ENCODE measurements at regions of chr3 and their contacts with region 1.

Region 1: DNA sequence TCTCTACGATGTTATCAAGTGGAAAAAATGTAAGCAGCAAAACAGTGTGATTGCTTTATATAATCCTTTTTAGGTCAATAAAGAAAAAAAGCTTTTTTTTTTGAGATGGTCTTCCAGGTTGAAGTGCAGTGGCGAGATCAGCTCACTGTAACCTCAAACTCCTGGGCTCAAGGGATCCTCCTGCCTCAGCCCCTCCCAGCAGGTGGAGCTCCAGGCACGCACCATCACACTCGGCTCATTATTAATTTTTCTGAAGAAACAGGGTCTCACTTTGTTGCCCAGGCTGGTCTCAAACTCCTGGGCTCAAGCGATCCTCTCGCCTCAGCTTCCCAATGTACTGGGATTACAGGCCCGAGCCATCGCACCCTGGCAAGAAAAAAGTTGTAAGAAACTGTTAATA is 17.3 kb downstream of the RNF168 start:
- DNase-seq: peak in 11 of 14 experiments; percentile 5 to 59 (median 30)
- ATAC-seq: no peak
- H3K4me3 ChIP-seq: no peak overlapping the region
- H3K4me3 Mint-ChIP-seq: no peak overlapping the region
- H3K27ac ChIP-seq: no peak overlapping the region
- H3K27ac Mint-ChIP-seq: no peak overlapping the region
- H3K4me1 ChIP-seq: no peaks in the 10 kb centered on the region
- H3K4me1 Mint-ChIP-seq: peaks cover 12% of the 10 kb centered on the region
- H3K27me3 ChIP-seq: no peaks in the 10 kb centered on the region
- H3K27me3 Mint-ChIP-seq: no peaks in the 10 kb centered on the region
- CTCF ChIP-seq: peak; percentile 59

Region 2: DNA sequence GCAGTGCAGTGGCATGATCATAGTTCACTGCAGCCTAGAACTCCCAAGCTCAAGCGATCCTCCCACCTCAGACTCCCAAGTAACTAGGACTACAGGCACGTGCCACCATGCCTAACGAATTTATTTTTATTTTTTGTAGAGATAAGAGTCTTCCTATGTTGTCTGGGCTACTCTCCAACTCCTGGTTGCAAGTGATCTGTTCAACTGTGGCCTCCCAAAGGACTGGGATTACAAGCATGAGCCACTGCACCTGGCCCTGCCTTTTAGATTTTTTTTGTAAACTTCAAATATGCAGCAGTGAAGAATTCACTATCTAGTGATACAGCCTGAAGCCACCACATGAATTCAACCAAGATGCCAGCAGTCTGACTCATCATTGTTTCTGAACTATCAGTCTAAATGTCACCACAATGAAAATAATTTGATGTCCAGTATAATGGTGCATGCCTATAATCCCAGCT is 86.7 kb before region 1 on chr3:
- CTCF ChIA-PET with region 1: no interaction called
- POLR2A ChIA-PET with region 1: no interaction called
- intact Hi-C with region 1: no loop called
- DNase-seq: no peak
- ATAC-seq: no peak
- H3K4me3 ChIP-seq: no peak overlapping the region
- H3K4me3 Mint-ChIP-seq: no peak overlapping the region
- H3K27ac ChIP-seq: no peak overlapping the region
- H3K27ac Mint-ChIP-seq: no peak overlapping the region
- H3K4me1 ChIP-seq: no peaks in the 10 kb centered on the region
- H3K4me1 Mint-ChIP-seq: no peaks in the 10 kb centered on the region
- H3K27me3 ChIP-seq: no peaks in the 10 kb centered on the region
- H3K27me3 Mint-ChIP-seq: no peaks in the 10 kb centered on the region
- CTCF ChIP-seq: no peak

Region 3: DNA sequence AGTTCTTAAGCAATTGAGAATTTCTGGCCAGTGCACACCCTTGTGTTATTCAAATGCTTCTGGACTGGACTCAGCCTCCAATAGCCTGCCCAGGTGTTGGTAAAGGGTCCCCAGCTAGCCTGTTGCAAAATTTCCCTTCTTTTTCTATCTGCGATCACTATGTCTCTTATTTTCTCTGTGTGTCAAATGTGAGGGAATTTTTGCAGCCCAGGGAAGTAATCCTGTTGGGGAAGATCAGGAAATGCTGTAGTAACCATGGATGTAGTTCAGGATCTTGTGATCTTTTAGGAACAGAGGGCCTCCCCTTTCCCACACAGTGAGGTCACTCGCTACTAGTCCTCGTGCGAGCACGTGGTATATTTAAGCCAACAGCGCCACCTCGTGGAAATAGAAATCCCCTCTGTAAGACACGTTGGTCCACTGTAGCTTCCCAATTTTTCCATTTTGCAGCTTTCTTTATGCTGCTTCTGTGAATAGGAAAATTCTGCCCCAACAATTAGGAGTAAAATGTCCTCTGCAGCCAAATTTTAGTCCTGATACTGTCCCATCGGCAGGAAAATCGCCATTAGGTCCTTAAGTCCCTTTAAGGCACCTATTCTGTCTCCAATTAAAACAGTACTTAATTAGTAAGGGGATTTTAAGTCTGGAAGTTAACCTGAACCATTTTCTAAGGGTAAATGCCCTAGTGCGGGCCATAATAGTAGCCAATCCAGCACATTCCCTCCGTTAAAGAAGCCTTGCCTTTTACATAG is 32.9 kb after region 1 on chr3:
- CTCF ChIA-PET with region 1: interaction called, 14 read pairs
- POLR2A ChIA-PET with region 1: no interaction called
- intact Hi-C with region 1: loop called in 1 of 2 experiments (anchors 5 kb)
- DNase-seq: peak; percentile 23 to 77 (median 45)
- ATAC-seq: no peak
- H3K4me3 ChIP-seq: no peak overlapping the region
- H3K4me3 Mint-ChIP-seq: no peak overlapping the region
- H3K27ac ChIP-seq: no peak overlapping the region
- H3K27ac Mint-ChIP-seq: no peak overlapping the region
- H3K4me1 ChIP-seq: no peaks in the 10 kb centered on the region
- H3K4me1 Mint-ChIP-seq: no peaks in the 10 kb centered on the region
- H3K27me3 ChIP-seq: no peaks in the 10 kb centered on the region
- H3K27me3 Mint-ChIP-seq: peaks cover 4% of the 10 kb centered on the region
- CTCF ChIP-seq: peak; percentile 50

Region 4: GRCh38 chr3:196528639-196529233 is 42.5 kb after region 1 on chr3:
- CTCF ChIA-PET with region 1: interaction called, 9 read pairs
- POLR2A ChIA-PET with region 1: no interaction called
- intact Hi-C with region 1: loop called in 1 of 2 experiments (anchors 5 kb)
- DNase-seq: peak; percentile 48 to 88 (median 72)
- ATAC-seq: peak; percentile 95
- H3K4me3 ChIP-seq: peak overlapping the region; percentile 52
- H3K4me3 Mint-ChIP-seq: peak overlapping the region; percentile 60
- H3K27ac ChIP-seq: no peak overlapping the region
- H3K27ac Mint-ChIP-seq: no peak overlapping the region
- H3K4me1 ChIP-seq: peaks cover 9% of the 10 kb centered on the region
- H3K4me1 Mint-ChIP-seq: peaks cover 4% of the 10 kb centered on the region
- H3K27me3 ChIP-seq: no peaks in the 10 kb centered on the region
- H3K27me3 Mint-ChIP-seq: no peaks in the 10 kb centered on the region
- CTCF ChIP-seq: peak; percentile 77

Measured in CD4-positive, alpha-beta T cell (primary cell).